ENCODE measurements at regions of chr17 and their contacts with region 1.

Region 1: DNA sequence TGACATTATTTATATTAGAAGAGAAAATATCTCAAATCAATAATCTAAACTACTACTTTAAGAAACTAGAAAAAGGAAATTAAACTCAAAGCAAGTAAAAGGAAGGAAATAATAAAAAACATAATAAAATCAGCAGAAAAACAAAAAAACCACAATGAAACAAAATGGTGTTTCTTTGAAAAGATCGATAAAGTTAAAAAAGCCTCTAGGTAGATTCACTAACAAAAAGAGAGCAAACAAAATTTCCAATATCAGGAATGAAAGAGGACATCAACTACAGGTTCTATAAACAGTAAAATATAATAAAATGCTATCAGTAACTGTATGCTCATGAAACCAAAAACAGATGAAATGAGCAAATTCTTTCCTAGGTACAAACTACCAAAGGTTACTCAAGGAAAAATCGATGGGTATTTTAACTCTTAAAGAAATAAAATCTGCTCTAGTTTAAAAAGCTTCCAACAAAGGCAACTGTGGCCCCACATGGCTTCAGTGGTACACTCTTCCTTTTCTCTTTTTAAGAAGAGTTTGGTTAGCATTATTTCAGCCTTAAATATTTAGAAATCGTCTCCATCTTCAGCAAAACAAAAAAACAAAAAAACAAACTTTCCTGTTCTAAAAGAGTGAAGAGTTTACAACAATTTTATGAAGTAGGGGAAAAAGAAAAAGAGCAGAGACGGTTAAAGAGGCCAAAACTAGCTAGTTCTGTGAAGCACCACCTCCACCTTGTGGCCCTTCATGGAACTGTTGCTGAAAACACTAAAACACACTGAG is 102.2 kb downstream of the TRIM37 start:
- DNase-seq: peak; percentile 49 to 70
- ATAC-seq: peak; percentile 74 to 90; a peak in 4 of 6 replicates
- H3K4me3 ChIP-seq: no peak overlapping the region
- H3K27ac ChIP-seq: no peak overlapping the region
- H3K4me1 ChIP-seq: 0 out of 3 replicates have a peak, but pooled peaks cover 4% of the 10 kb centered on the region
- CTCF ChIP-seq: peak; percentile 99
- EP300 ChIP-seq: no peak
- POLR2A ChIP-seq: no peak
- RAD21 ChIP-seq: peak; percentile 95 to 98

Region 2: GRCh38 chr17:58517734-58518609 is 486.6 kb before region 1 on chr17:
- CTCF ChIA-PET with region 1: interaction called, 42 read pairs
- POLR2A ChIA-PET with region 1: interaction called, 6 read pairs
- DNase-seq: peak; percentile 100
- ATAC-seq: peak; percentile 84 to 90
- H3K4me3 ChIP-seq: peak overlapping the region; percentile 72
- H3K27ac ChIP-seq: peak overlapping the region; percentile 76 to 87
- H3K4me1 ChIP-seq: peaks cover 15% of the 10 kb centered on the region
- CTCF ChIP-seq: no peak
- EP300 ChIP-seq: no peak
- POLR2A ChIP-seq: peak; percentile 48
- RAD21 ChIP-seq: no peak

Region 3: DNA sequence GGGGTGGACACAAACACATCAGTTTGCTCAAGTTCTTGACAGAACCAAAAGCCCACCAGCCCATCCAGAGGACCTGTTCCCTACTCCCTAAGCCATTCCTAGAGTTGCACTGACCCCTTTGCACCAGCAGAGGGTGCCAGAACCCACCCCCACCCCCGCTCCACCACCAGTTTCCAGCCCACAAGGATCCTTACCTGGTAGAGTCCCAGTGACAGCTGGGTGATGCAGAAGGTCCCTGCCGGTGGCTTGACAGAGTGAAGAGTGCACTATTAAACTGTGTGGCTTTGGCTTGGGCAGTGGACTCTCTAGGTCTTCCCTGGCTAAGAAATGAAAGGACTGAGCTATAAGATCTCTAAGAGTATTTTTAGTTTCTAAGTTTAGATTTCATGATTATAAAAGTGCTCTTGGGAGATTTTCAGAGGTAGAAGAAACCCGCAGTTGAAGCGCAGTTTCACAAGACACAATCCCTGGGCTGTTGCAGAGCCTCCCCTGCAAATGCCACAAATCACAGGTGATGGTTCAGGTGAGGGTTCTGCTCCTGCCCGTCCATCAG is 416.7 kb before region 1 on chr17:
- CTCF ChIA-PET with region 1: interaction called, 24 read pairs
- POLR2A ChIA-PET with region 1: no interaction called
- DNase-seq: peak; percentile 69 to 81
- ATAC-seq: peak; percentile 91 to 96
- H3K4me3 ChIP-seq: no peak overlapping the region
- H3K27ac ChIP-seq: no peak overlapping the region
- H3K4me1 ChIP-seq: no peaks in the 10 kb centered on the region
- CTCF ChIP-seq: peak; percentile 93
- EP300 ChIP-seq: no peak
- POLR2A ChIP-seq: no peak
- RAD21 ChIP-seq: peak; percentile 89

Region 4: GRCh38 chr17:58658804-58659713 is 345.5 kb before region 1 on chr17:
- CTCF ChIA-PET with region 1: interaction called, 3 read pairs
- POLR2A ChIA-PET with region 1: interaction called, 11 read pairs
- DNase-seq: peak; percentile 92 to 95
- ATAC-seq: peak; percentile 92 to 95
- H3K4me3 ChIP-seq: peak overlapping the region; percentile 56
- H3K27ac ChIP-seq: peak overlapping the region; percentile 88 to 89
- H3K4me1 ChIP-seq: peaks cover 3% of the 10 kb centered on the region; the same call in 1 of the 3 replicates
- CTCF ChIP-seq: no peak; the same call in 2 of the 3 replicates
- EP300 ChIP-seq: peak in 1 of 2 experiments; percentile 46; a peak in 1 of 5 replicates
- POLR2A ChIP-seq: peak; percentile 100
- RAD21 ChIP-seq: peak; percentile 10 to 45; a peak in 3 of 5 replicates

Region 5: DNA sequence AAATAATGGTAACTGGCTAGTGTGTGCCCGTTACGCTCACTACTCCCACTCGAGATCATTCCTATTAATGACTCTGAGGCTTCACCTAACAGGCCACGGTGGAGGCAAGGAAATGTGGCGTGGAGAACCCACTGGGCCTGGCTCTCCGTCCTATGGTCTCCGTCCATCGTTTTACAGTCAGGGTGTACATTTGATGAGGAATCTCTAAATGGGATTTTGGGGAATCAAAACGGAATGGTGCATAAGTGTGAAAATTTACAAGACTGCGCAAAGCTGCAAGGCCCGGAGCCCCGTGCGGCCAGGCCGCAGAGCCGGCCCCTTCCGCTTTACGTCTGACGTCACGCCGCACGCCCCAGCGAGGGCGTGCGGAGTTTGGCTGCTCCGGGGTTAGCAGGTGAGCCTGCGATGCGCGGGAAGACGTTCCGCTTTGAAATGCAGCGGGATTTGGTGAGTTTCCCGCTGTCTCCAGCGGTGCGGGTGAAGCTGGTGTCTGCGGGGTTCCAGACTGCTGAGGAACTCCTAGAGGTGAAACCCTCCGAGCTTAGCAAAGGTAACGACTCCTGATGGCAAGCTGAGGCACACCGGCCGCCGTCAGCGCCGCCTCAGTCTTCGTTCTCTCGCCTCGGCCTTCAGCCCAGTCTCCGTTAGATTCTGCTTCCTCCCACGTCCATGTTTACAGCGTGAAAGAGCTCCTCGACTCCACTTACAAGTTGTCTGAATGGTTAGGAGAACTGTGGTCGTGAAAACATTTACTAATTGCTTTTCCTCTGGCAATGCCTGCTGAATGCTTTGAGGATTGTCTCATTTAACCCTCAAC is 312.1 kb before region 1 on chr17 and contains the start of gene RAD51C:
- CTCF ChIA-PET with region 1: interaction called, 10 read pairs
- POLR2A ChIA-PET with region 1: no interaction called
- DNase-seq: peak; percentile 90 to 93
- ATAC-seq: peak; percentile 99
- H3K4me3 ChIP-seq: peak within 1 kb of the TSS; percentile 53
- H3K27ac ChIP-seq: peak within 1 kb of the TSS; percentile 65 to 85
- H3K4me1 ChIP-seq: peaks cover 19% of the 10 kb centered on the region
- CTCF ChIP-seq: no peak
- EP300 ChIP-seq: no peak
- POLR2A ChIP-seq: peak; percentile 82
- RAD21 ChIP-seq: no peak
- polyA plus RNA-seq, gene RAD51C: 96.7 and 121 TPM in 2 replicates

Region 6: GRCh38 chr17:58710936-58711775 is 293.4 kb before region 1 on chr17:
- CTCF ChIA-PET with region 1: interaction called, 169 read pairs
- POLR2A ChIA-PET with region 1: interaction called, 10 read pairs
- DNase-seq: peak in 1 of 2 experiments; percentile 71
- ATAC-seq: peak in 1 of 2 experiments; percentile 68; a peak in 3 of 6 replicates
- H3K4me3 ChIP-seq: no peak overlapping the region
- H3K27ac ChIP-seq: no peak overlapping the region
- H3K4me1 ChIP-seq: no peaks in the 10 kb centered on the region
- CTCF ChIP-seq: peak; percentile 97
- EP300 ChIP-seq: no peak
- POLR2A ChIP-seq: no peak
- RAD21 ChIP-seq: peak; percentile 89 to 97

Region 7: DNA sequence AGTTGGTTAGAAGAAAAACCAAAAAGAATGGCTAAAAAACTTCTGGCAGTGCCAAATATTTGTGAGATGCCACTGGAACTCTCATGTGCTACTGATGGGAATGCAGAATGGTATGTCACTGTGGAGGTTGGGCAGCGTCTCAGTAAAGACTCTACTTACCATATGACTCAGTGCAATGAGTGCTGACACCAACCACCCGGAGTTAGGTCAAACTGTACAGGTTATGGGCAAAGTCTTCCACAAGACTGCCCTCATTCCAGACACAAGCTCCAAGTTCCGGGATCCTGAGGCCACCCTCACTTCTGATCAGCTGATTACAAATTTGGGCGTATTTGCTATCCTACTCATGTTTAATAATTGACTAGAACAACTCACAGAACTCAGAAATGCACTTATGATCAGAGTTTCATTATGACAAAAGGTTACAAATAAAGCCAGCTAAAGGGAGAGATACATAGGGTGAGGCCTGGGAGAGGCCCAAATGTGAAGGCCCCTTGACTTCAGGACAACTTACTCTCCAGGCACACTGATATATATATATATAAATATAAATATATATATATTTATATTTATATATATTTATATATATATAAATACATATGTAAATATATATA is 12.7 kb before region 1 on chr17:
- CTCF ChIA-PET with region 1: interaction called, 28 read pairs
- POLR2A ChIA-PET with region 1: no interaction called
- DNase-seq: peak in 1 of 2 experiments; percentile 37
- ATAC-seq: peak; percentile 34 to 49; a peak in 4 of 6 replicates
- H3K4me3 ChIP-seq: no peak overlapping the region
- H3K27ac ChIP-seq: no peak overlapping the region
- H3K4me1 ChIP-seq: peaks cover 12% of the 10 kb centered on the region; the same call in 2 of the 3 replicates
- CTCF ChIP-seq: no peak
- EP300 ChIP-seq: no peak
- POLR2A ChIP-seq: no peak
- RAD21 ChIP-seq: no peak

Region 8: GRCh38 chr17:59046192-59046591 is 41.7 kb after region 1 on chr17:
- CTCF ChIA-PET with region 1: no interaction called
- POLR2A ChIA-PET with region 1: no interaction called
- DNase-seq: no peak
- ATAC-seq: no peak
- H3K4me3 ChIP-seq: no peak overlapping the region
- H3K27ac ChIP-seq: no peak overlapping the region
- H3K4me1 ChIP-seq: no peaks in the 10 kb centered on the region
- CTCF ChIP-seq: no peak
- EP300 ChIP-seq: no peak
- POLR2A ChIP-seq: no peak
- RAD21 ChIP-seq: no peak

Measured in A549 (cell line).